HEK293 (cell line): ENCODE measurements at regions of chr12 and their contacts with region 1.

Region 1: GRCh38 chr12:98698603-98699463 is 53.7 kb downstream of the APAF1 start:
- H3K4me3 ChIP-seq: no peak overlapping the region
- H3K27ac ChIP-seq: no peak overlapping the region
- H3K4me1 ChIP-seq: no peaks in the 10 kb centered on the region
- CTCF ChIP-seq: peak; percentile 54

Region 2: GRCh38 chr12:98714426-98714825 is 15.6 kb after region 1 on chr12:
- CTCF ChIA-PET with region 1: interaction called, 14 read pairs
- POLR2A ChIA-PET with region 1: no interaction called
- H3K4me3 ChIP-seq: no peak overlapping the region
- H3K27ac ChIP-seq: no peak overlapping the region
- H3K4me1 ChIP-seq: no peaks in the 10 kb centered on the region
- CTCF ChIP-seq: no peak

Region 3: DNA sequence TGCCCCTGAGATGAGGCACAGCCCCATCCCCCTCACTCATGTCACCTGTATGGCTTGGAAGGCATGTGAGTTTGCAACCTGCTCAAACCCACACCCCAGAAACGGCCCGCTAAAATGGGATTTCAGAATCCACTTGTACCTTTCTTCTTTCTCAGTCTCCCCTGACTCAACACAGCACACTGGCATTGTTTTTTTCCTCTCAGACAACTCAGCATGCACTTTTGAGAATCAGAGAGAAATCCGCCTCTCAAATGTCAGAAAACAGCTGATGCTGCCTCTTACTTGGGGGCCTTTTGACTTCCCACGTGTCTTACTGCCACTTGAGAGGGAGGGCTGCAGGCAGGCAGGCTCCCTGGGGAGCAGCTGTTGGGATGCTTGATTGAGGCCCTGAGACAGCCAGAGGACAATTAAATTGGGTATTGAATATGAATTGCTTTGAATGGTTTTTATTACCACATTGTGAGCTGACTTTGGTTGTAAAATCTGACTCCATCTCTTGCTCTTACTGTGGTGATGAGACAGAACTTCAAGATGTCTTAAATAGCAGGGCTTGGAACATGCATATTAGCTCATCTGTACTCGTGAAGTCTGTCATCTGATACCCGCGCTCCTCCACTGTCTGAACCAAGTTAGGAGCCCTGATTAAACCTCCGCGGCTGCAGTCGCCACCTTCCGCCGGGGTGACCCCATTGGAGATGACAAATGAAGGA is 42.9 kb after region 1 on chr12:
- CTCF ChIA-PET with region 1: interaction called, 14 read pairs
- POLR2A ChIA-PET with region 1: no interaction called
- H3K4me3 ChIP-seq: no peak overlapping the region
- H3K27ac ChIP-seq: no peak overlapping the region
- H3K4me1 ChIP-seq: peaks cover 11% of the 10 kb centered on the region; the same call in 1 of the 2 replicates
- CTCF ChIP-seq: no peak

Region 4: GRCh38 chr12:98939350-98939749 is 240.5 kb after region 1 on chr12:
- CTCF ChIA-PET with region 1: interaction called, 13 read pairs
- POLR2A ChIA-PET with region 1: no interaction called
- H3K4me3 ChIP-seq: no peak overlapping the region
- H3K27ac ChIP-seq: no peak overlapping the region
- H3K4me1 ChIP-seq: no peaks in the 10 kb centered on the region
- CTCF ChIP-seq: no peak